Calu3 (cell line): ENCODE measurements at regions of chr3 and their contacts with region 1.

Region 1: DNA sequence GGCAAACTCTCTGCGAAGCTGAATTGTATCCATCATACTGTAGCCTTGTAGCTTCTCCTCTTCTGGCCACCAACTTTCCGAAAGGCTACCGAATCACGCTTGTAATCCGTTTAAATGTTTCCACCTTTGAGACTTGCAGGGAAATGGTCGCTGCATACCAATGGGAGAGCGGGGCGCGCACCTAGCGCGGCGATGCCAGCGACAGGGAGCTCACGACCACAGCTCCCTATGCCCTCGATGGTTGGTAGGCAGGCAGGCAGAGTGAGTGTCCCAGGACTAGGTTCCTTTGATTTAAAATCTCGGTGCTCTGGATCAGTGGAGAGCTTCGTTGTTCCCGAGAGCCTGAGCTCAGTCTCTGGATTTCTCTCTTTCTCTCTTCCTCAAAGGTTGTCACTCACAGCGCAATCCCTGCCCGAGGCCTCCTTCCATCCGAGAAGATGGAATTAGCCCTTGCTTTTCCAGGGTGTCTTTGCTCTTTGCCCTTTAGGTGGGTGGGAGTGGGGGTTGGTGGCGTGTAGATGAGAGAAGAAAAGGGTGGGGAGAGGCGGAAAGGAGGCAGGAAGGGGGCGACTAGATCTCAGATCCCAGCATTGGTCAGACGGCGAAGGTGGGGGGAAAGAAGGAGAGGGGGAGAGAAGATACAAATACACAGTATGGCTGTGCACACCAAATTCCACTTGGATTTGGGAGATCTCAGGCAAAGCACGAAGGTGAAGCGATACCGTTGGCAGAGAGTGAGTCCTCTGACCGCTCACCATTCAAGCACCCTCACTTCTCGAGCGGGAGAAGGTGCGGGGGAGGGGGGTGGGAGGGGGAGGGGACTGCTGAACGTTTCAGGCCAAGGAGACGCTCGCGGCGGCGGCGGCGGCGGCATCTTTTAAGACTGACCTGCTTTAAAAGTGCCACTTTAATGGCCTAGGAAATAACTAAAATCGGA is at the start of gene SLITRK3:
- DNase-seq: no peak
- H3K4me3 Mint-ChIP-seq: peak within 1 kb of the TSS; percentile 82
- H3K27ac Mint-ChIP-seq: peak within 1 kb of the TSS; percentile 43
- H3K4me1 Mint-ChIP-seq: peaks cover 18% of the 10 kb centered on the region
- H3K27me3 Mint-ChIP-seq: peaks cover 37% of the 10 kb centered on the region
- CTCF ChIP-seq: no peak
- total RNA-seq, gene SLITRK3: not detected in 2 replicates

Region 2: DNA sequence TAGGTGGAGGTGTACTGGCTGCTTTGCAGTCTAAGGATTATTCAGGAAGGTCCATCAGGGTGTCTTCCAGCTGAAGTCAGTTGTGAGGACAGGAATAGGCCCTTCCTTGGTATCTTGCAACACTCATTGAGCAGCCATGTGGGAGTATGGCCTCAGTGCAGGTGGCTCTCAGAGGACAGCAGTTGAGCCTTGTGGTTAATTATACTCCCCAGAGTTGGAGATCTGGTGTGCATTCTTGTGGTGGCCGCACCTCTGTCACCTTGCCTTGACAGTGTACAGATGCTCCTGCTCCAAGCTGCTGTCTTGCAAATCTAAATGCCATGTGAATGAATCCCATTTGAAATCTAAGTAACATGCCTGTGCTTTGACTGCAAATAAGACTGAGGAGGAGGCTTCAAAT is 981.2 kb after region 1 on chr3:
- CTCF ChIA-PET with region 1: interaction called, 10 read pairs
- intact Hi-C with region 1: no loop called
- DNase-seq: no peak
- H3K4me3 Mint-ChIP-seq: no peak overlapping the region
- H3K27ac Mint-ChIP-seq: no peak overlapping the region
- H3K4me1 Mint-ChIP-seq: no peaks in the 10 kb centered on the region
- H3K27me3 Mint-ChIP-seq: no peaks in the 10 kb centered on the region
- CTCF ChIP-seq: no peak